ENCODE measurements at regions of chr2 and their contacts with region 1.

Region 1: GRCh38 chr2:182426082-182426917 is 536 bp downstream of the PDE1A start:
- DNase-seq: no peak
- ATAC-seq: peak; percentile 67
- H3K4me3 ChIP-seq: peak overlapping the region; percentile 90 to 93
- H3K27ac ChIP-seq: peak overlapping the region; percentile 9 to 85
- H3K4me1 ChIP-seq: peaks cover 0 to 3% of the 10 kb centered on the region in 2 donors
- H3K27me3 ChIP-seq: no peaks in the 10 kb centered on the region

Region 2: DNA sequence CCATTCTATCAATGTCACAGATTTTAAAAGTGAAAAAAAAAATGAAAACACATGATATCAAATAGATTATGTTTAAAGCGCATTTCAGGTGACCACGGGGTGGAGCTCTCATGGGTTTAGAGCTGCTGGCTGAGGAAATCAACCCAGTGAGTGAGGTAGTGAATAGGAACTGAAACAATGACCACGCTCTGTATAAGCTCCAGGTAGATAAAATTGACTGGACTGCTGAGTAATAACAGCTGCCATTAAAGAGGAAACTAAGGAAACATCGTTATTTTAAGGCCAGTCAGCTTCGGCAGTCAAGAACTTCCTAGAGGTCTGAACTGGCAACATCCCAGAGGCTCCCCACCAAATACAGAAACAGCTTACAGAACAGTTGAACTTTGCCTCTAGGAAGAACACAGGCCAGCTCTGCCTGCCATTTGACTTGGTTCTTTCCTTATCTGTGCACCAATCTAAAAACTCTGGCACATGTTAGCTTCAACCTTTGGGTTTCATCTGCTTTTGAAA is 185.4 kb before region 1 on chr2:
- intact Hi-C with region 1: loop called in 1 of 2 experiments (anchors 10 kb)
- DNase-seq: no peak
- ATAC-seq: peak; percentile 73
- H3K4me3 ChIP-seq: no peak overlapping the region
- H3K27ac ChIP-seq: peak overlapping the region in 1 of 2 donors; percentile 29
- H3K4me1 ChIP-seq: peaks cover 0 to 2% of the 10 kb centered on the region in 2 donors
- H3K27me3 ChIP-seq: no peaks in the 10 kb centered on the region

Region 3: GRCh38 chr2:182642328-182642727 is 216.0 kb after region 1 on chr2:
- intact Hi-C with region 1: loop called in 1 of 2 experiments (anchors 10 kb)
- DNase-seq: peak; percentile 59 to 83
- ATAC-seq: no peak
- H3K4me3 ChIP-seq: no peak overlapping the region
- H3K27ac ChIP-seq: no peak overlapping the region
- H3K4me1 ChIP-seq: no peaks in the 10 kb centered on the region
- H3K27me3 ChIP-seq: no peaks in the 10 kb centered on the region